ENCODE measurements at regions of chr2 and their contacts with region 1.

Region 1: GRCh38 chr2:46461011-46461674 is 18.2 kb upstream of the TMEM247 start:
- DNase-seq: peak; percentile 71
- ATAC-seq: peak; percentile 80
- H3K4me3 Mint-ChIP-seq: peak overlapping the region; percentile 60
- H3K27ac Mint-ChIP-seq: peak overlapping the region; percentile 81
- H3K4me1 Mint-ChIP-seq: peaks cover 21% of the 10 kb centered on the region
- H3K27me3 Mint-ChIP-seq: no peaks in the 10 kb centered on the region
- CTCF ChIP-seq: peak; percentile 74

Region 2: GRCh38 chr2:45993476-45993991 is 467.6 kb before region 1 on chr2:
- CTCF ChIA-PET with region 1: no interaction called
- POLR2A ChIA-PET with region 1: no interaction called
- intact Hi-C with region 1: loop called (anchors 1 kb)
- DNase-seq: no peak
- ATAC-seq: peak; percentile 47
- H3K4me3 Mint-ChIP-seq: no peak overlapping the region
- H3K27ac Mint-ChIP-seq: no peak overlapping the region
- H3K4me1 Mint-ChIP-seq: no peaks in the 10 kb centered on the region
- H3K27me3 Mint-ChIP-seq: no peaks in the 10 kb centered on the region
- CTCF ChIP-seq: peak; percentile 61

Region 3: GRCh38 chr2:46010925-46011490 is 450.1 kb before region 1 on chr2:
- CTCF ChIA-PET with region 1: interaction called, 3 read pairs
- POLR2A ChIA-PET with region 1: no interaction called
- intact Hi-C with region 1: loop called (anchors 1 kb)
- DNase-seq: no peak
- ATAC-seq: no peak
- H3K4me3 Mint-ChIP-seq: no peak overlapping the region
- H3K27ac Mint-ChIP-seq: no peak overlapping the region
- H3K4me1 Mint-ChIP-seq: no peaks in the 10 kb centered on the region
- H3K27me3 Mint-ChIP-seq: no peaks in the 10 kb centered on the region
- CTCF ChIP-seq: no peak

Region 4: DNA sequence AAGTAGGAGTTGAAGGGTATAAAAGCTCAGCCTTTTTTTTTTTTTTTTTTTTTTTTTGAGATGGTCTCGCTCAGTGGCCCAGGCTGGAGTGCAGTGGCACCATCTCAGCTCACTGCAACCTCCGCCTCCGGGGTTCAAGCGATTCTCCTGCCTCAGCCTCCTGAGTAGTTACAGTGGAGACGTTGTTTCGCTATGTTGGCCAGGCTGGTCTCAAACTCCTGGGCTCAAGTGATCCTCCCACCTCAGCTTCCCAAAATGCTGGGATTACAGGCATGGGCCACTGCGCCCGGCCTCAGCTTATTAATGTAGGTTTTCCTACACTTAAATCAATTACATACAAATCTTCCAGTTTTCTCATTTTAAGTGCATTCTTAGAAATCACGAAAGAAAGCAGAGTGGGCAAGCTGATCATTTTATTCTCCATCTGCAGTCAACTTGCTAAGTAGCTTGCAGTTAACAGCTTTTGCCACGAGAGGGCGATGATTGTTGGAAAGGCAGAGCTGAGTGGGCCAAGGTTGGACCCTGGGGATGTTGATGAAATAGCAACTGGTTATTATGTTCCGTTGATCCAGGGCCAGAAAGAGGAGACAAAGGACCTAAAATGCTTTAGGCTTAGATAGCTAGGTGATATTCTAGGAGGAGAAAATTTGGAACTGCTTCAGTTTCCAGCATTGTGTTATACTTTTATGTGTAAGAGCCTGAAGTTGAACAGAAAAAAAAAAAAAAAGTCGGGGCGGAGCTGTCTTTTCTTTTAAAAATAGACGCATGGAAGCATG is 398.3 kb before region 1 on chr2:
- CTCF ChIA-PET with region 1: interaction called, 10 read pairs
- POLR2A ChIA-PET with region 1: no interaction called
- intact Hi-C with region 1: loop called (anchors 1 kb)
- DNase-seq: peak; percentile 30
- ATAC-seq: peak; percentile 70
- H3K4me3 Mint-ChIP-seq: no peak overlapping the region
- H3K27ac Mint-ChIP-seq: no peak overlapping the region
- H3K4me1 Mint-ChIP-seq: no peaks in the 10 kb centered on the region
- H3K27me3 Mint-ChIP-seq: no peaks in the 10 kb centered on the region
- CTCF ChIP-seq: peak; percentile 59

Measured in activated B cell treated with CpG ODN at 0.5 μM for 24 hours (primary cell).